ENCODE measurements at regions of chr20 and their contacts with region 1.

Region 1: GRCh38 chr20:53722515-53723444 is 129.1 kb upstream of the ZNF217 start:
- DNase-seq: no peak
- ATAC-seq: no peak
- H3K4me3 ChIP-seq: no peak overlapping the region
- H3K27ac ChIP-seq: no peak overlapping the region
- H3K4me1 ChIP-seq: peaks cover 0 to 15% (median 0%) of the 10 kb centered on the region in 9 donors
- H3K27me3 ChIP-seq: no peaks in the 10 kb centered on the region
- CTCF ChIP-seq: no peak

Region 2: GRCh38 chr20:53608456-53609452 is 114.0 kb before region 1 on chr20:
- intact Hi-C with region 1: no loop called
- DNase-seq: peak in 1 of 2 donors; percentile 41
- ATAC-seq: peak in 5 of 8 donors; percentile 47 to 69 (median 61)
- H3K4me3 ChIP-seq: peak overlapping the region in 1 of 10 donors; percentile 33
- H3K27ac ChIP-seq: peak overlapping the region in 9 of 10 donors; percentile 9 to 86 (median 51)
- H3K4me1 ChIP-seq: peaks cover 0 to 51% (median 14%) of the 10 kb centered on the region in 9 donors
- H3K27me3 ChIP-seq: no peaks in the 10 kb centered on the region
- CTCF ChIP-seq: no peak

Region 3: DNA sequence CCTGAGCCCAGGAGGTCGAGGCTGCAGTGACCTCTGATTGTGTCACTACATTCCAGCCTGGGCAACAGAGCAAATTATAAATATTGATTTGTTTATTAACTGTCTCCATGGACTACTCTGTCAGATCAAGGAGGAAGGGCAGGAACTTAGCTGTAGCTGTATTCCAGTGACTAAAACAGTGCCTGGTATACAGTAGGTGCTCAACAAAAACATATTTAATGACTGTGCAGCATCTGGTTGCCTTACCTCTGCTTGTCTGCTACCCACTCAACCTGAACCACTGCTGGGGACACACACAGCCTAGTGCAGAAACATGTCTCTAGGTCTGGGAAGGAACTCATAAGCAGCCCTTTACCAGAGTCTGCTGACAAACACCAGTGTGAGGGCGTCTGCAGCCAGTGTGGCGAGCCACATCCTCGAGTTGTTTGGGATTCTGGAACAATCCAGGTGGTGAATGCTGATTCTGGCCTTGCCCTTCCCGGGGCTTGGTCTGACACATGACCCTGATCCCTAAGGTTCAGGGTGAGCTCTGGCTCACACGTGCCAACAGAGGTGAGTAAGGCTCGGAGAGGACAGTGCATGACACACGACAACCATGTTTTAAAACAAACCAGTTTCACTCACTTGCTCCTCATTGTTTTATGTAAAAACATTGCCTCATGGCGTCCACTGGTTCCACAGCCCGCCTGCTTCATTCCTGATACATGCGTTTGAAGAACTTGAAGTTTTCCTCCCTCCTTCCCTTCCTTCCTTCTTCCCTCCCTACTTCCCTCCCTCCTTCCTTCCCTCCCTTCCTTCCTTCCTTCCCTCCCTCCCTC is 11.2 kb before region 1 on chr20:
- intact Hi-C with region 1: loop called in 1 of 10 experiments (anchors 1 kb)
- DNase-seq: no peak
- ATAC-seq: no peak
- H3K4me3 ChIP-seq: no peak overlapping the region
- H3K27ac ChIP-seq: no peak overlapping the region
- H3K4me1 ChIP-seq: peaks cover 0 to 29% (median 9%) of the 10 kb centered on the region in 9 donors
- H3K27me3 ChIP-seq: no peaks in the 10 kb centered on the region
- CTCF ChIP-seq: no peak

Region 4: GRCh38 chr20:53972179-53972696 is 249.5 kb after region 1 on chr20:
- intact Hi-C with region 1: no loop called
- DNase-seq: no peak
- ATAC-seq: no peak
- H3K4me3 ChIP-seq: no peak overlapping the region
- H3K27ac ChIP-seq: no peak overlapping the region
- H3K4me1 ChIP-seq: no peaks in the 10 kb centered on the region
- H3K27me3 ChIP-seq: no peaks in the 10 kb centered on the region
- CTCF ChIP-seq: no peak

Measured in heart right ventricle (tissue), 16 donors.